ENCODE measurements at regions of chr10 and their contacts with region 1.

Region 1: DNA sequence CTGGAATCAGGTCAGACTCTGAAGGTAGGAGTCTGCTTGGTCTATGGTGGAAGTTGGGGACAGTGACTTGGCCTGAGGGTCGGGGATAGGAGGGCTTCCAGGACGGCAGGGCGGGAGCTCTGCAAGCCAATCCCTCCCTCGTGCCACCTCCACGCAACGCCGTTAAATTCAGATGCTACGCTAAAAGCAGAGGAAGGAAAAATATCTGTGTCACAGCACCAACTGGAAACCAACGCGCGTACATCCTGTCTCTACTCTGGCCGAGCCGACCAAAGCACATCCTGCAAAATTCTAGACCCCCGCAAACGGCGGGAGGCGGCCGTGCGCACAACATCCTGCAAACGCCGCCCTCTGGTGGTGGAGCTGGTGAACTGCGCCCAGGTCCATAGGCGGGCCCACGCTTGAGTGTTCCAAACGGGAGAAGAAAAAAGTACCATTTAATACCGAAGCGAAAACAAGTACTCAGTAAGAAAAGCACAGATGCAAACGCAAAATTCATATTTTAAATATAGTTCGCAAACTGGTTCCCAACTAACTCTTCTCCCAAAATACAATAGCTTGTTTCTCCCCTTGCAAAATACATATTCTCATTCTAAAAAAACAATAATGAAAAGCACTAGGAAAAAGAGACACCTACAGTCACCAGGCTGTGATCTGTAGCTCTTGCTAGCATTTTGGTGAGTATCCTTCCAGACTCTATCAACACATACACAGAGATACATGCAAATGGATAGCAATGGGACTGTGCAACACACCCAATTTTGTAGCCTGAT is 45.7 kb upstream of the HSPA12A start:
- DNase-seq: peak; percentile 69
- ATAC-seq: peak; percentile 94
- H3K4me3 ChIP-seq: peak overlapping the region; percentile 35
- H3K27ac ChIP-seq: no peak overlapping the region
- H3K4me1 ChIP-seq: no peaks in the 10 kb centered on the region
- H3K27me3 ChIP-seq: peaks cover 3% of the 10 kb centered on the region; the same call in 1 of the 2 replicates
- CTCF ChIP-seq: peak; percentile 97
- POLR2A ChIP-seq: no peak
- RAD21 ChIP-seq: peak; percentile 97

Region 2: DNA sequence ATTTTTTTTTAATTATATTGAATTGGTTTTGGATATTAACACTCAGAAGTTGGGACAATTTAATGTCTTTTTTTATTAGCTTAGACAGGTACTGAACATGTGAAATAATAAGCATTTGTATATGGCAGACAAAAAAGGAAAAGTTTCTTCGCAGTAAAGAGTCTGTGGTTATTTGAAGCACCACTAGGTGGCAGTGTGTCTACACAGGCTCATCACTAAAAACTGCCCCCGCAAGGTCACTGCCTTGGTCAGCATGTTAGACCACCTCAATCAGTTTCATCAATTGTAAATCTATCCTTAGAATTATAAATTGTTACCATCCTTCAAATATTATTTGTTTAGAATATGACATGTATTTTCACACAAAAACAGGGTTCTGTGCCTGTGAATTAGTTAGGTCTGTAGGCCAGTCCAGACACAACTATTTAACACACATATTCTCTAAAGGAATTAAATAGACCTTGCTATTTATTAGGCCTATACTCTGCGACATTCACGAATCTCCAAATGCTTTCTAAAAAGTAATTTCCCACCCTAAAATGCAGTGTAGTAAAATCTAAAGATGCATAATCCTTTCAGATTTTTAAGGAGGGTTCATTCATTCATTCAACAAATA is 343.4 kb before region 1 on chr10:
- CTCF ChIA-PET with region 1: no interaction called
- POLR2A ChIA-PET with region 1: no interaction called
- dilution Hi-C with region 1: no loop called
- in situ Hi-C with region 1: no loop called
- intact Hi-C with region 1: loop called (anchors 2 kb)
- DNase-seq: peak; percentile 31
- ATAC-seq: peak; percentile 73
- H3K4me3 ChIP-seq: no peak overlapping the region
- H3K27ac ChIP-seq: no peak overlapping the region
- H3K4me1 ChIP-seq: no peaks in the 10 kb centered on the region
- H3K27me3 ChIP-seq: no peaks in the 10 kb centered on the region
- CTCF ChIP-seq: peak; percentile 67
- POLR2A ChIP-seq: no peak
- RAD21 ChIP-seq: peak; percentile 47

Region 3: GRCh38 chr10:116627386-116627933 is 160.6 kb before region 1 on chr10:
- CTCF ChIA-PET with region 1: interaction called, 7 read pairs
- POLR2A ChIA-PET with region 1: no interaction called
- dilution Hi-C with region 1: no loop called
- in situ Hi-C with region 1: no loop called
- intact Hi-C with region 1: loop called (anchors 1 kb)
- DNase-seq: no peak
- ATAC-seq: peak; percentile 84
- H3K4me3 ChIP-seq: no peak overlapping the region
- H3K27ac ChIP-seq: no peak overlapping the region
- H3K4me1 ChIP-seq: no peaks in the 10 kb centered on the region
- H3K27me3 ChIP-seq: peaks cover 12% of the 10 kb centered on the region
- CTCF ChIP-seq: peak; percentile 31
- POLR2A ChIP-seq: no peak
- RAD21 ChIP-seq: peak; percentile 44

Region 4: DNA sequence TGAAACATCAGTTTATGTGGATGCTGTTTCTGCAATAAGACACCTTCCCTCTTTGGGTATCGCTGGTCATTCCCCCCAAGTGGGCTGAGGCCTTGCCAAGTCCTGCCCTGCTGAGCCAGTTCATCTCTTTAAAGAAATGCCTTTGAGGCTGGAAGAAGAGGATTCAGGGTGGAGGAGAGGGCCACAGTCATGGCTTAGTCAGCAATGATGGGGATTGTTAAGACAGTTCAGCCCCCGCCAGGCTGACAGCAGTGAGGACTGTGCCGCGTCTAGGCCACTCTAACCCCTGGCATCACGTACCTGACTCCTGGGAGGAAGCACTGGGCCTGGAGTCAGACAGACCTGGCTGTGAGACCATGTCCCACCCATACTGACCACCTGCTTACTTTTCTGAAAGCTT is 119.0 kb before region 1 on chr10:
- CTCF ChIA-PET with region 1: no interaction called
- POLR2A ChIA-PET with region 1: no interaction called
- dilution Hi-C with region 1: no loop called
- in situ Hi-C with region 1: no loop called
- intact Hi-C with region 1: no loop called
- DNase-seq: peak; percentile 37
- ATAC-seq: no peak
- H3K4me3 ChIP-seq: no peak overlapping the region
- H3K27ac ChIP-seq: no peak overlapping the region
- H3K4me1 ChIP-seq: peaks cover 8% of the 10 kb centered on the region
- H3K27me3 ChIP-seq: no peaks in the 10 kb centered on the region
- CTCF ChIP-seq: no peak
- POLR2A ChIP-seq: no peak
- RAD21 ChIP-seq: no peak

Region 5: GRCh38 chr10:116690356-116691322 is 97.4 kb before region 1 on chr10:
- CTCF ChIA-PET with region 1: interaction called, 39 read pairs
- POLR2A ChIA-PET with region 1: no interaction called
- dilution Hi-C with region 1: loop called (anchors 25 kb)
- in situ Hi-C with region 1: no loop called
- intact Hi-C with region 1: no loop called
- DNase-seq: peak; percentile 28
- ATAC-seq: no peak
- H3K4me3 ChIP-seq: no peak overlapping the region
- H3K27ac ChIP-seq: no peak overlapping the region
- H3K4me1 ChIP-seq: peaks cover 20% of the 10 kb centered on the region
- H3K27me3 ChIP-seq: no peaks in the 10 kb centered on the region
- CTCF ChIP-seq: 0 out of 2 replicates have a peak, but pooled peaks have one; percentile 23
- POLR2A ChIP-seq: no peak
- RAD21 ChIP-seq: peak; percentile 32; the same call in 1 of the 2 replicates

Region 6: DNA sequence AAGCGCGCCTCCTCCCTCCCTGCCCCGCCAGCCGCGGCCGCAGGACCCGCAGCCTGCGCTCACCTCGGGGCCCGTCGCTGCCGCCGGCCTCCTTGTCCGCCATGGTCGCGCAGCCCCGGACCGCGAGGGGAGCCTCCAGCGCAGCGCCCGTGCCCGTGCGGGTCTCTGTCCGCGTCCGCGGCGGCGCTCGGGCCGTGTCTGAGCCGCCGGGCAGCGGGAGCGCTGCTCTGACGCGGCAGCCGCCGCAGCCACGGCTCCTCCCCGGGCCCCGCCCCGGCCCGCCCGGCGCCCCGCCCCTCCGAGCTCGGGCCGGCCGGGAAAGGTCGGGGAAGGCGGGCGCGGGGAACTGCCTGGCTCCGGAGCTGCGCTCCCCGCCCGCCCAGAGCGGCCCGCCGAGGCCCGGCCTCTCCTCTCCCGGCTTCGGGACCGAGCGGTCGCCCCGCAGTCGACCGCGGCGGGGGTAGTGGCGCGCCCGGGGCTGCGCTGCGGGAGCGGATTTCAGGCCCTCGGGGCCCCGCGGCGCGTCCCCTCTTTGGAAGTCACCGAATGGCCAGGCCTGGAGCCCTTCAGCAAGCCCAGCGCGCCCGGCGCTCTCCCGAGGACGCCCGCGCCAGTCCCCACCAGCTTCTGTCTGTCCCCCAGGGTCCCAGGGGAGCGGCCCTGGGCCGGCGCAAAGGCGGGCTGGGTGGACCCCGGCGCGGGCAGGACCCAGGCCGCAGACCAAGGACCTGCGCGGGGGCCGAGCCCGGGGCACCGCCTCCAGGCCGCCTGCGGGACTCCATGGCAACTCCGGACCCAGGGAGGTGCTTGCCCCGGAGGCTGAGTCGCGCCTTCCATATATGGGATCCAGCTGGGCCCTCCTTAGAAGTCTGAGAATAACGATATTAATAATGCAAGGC is 45.5 kb before region 1 on chr10 and contains the start of gene HSPA12A:
- CTCF ChIA-PET with region 1: no interaction called
- POLR2A ChIA-PET with region 1: no interaction called
- dilution Hi-C with region 1: no loop called
- in situ Hi-C with region 1: no loop called
- intact Hi-C with region 1: loop called (anchors 1 kb)
- DNase-seq: peak; percentile 89
- ATAC-seq: peak; percentile 89
- H3K4me3 ChIP-seq: peak within 1 kb of the TSS; percentile 100
- H3K27ac ChIP-seq: peak within 1 kb of the TSS; percentile 71
- H3K4me1 ChIP-seq: peaks cover 9% of the 10 kb centered on the region
- H3K27me3 ChIP-seq: no peaks in the 10 kb centered on the region
- CTCF ChIP-seq: no peak
- POLR2A ChIP-seq: peak; percentile 94
- RAD21 ChIP-seq: no peak
- total RNA-seq, gene HSPA12A: 16.1 and 18.6 TPM in 2 replicates